BJ (cell line): ENCODE measurements at regions of chr1 and their contacts with region 1.

Region 1: GRCh38 chr1:153510984-153511410 is 24.8 kb downstream of the S100A6 start:
- DNase-seq: no peak
- H3K4me3 ChIP-seq: no peak overlapping the region
- H3K27me3 ChIP-seq: no peaks in the 10 kb centered on the region
- CTCF ChIP-seq: peak; percentile 97

Region 2: DNA sequence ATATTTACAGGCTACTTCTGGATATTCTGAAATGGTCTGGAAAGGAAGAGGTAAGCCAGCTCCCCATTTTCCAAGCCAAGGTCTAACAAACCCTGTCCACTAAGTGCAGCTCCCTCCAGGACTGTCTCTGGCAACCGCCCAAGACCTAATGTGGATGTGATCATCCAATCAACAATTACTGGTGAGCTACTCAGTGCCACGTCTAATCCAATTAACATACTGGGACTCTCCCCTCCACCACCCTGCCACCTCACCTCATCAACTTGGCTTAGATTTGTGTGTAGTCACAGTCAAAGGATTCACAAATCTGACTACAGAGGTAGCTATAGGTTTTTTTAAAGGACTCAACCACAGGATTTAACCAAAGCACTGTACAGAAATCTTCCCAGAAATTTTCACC is 25.1 kb before region 1 on chr1:
- CTCF ChIA-PET with region 1: no interaction called
- POLR2A ChIA-PET with region 1: no interaction called
- DNase-seq: no peak
- H3K4me3 ChIP-seq: no peak overlapping the region
- H3K27me3 ChIP-seq: peaks cover 9% of the 10 kb centered on the region
- CTCF ChIP-seq: no peak

Region 3: GRCh38 chr1:153526132-153526543 is 15.1 kb after region 1 on chr1:
- CTCF ChIA-PET with region 1: interaction called, 22 read pairs
- POLR2A ChIA-PET with region 1: no interaction called
- DNase-seq: no peak
- H3K4me3 ChIP-seq: no peak overlapping the region
- H3K27me3 ChIP-seq: no peaks in the 10 kb centered on the region
- CTCF ChIP-seq: no peak

Region 4: GRCh38 chr1:153566440-153567379 is 55.7 kb after region 1 on chr1:
- CTCF ChIA-PET with region 1: interaction called, 223 read pairs
- POLR2A ChIA-PET with region 1: no interaction called
- DNase-seq: peak; percentile 89
- H3K4me3 ChIP-seq: no peak overlapping the region
- H3K27me3 ChIP-seq: no peaks in the 10 kb centered on the region
- CTCF ChIP-seq: no peak

Region 5: GRCh38 chr1:153617675-153618074 is 106.7 kb after region 1 on chr1:
- CTCF ChIA-PET with region 1: interaction called, 45 read pairs
- POLR2A ChIA-PET with region 1: no interaction called
- DNase-seq: no peak
- H3K4me3 ChIP-seq: no peak overlapping the region
- H3K27me3 ChIP-seq: no peaks in the 10 kb centered on the region
- CTCF ChIP-seq: peak; percentile 89

Region 6: DNA sequence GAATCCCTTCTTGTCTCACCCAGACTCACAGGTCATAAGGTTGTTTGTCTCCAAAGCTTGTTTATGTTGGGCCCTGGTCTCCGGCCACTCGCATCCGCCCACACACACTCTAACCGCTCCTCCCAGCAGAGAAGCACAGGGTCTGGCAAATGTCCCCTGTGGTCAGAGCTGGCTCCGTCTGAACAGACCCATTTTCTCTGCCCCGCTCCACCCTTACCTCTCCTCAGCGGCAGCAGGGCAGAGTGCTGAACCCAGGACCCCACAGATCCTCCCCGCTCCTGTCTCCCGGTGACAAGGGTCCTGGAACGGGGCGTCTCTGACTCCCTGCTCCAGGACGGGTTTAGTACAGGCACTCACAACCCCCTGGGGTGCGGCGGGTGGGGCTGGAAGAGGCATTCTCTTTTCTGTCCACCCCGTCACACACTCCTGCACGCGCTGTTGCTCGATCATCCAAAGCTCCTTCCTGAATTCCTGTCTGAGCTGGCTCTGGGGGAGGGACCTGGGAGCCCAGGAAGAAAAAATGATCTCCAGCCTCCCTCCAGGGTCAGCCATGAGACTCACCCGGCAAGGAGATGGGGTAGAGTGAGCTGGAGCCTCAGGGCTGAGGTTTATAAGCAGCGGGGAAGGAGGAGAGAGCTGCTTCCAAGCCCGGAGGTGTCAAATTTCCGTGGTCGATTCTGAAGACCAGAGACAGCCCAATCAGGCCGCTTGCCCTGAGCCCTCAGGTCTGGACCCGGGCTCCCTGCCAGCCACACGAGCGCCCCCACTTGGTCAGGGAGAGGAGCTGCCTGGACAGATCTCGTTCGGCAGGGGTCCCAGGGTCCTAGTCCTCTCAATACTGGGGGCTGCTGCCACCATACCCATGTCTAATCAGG is 116.2 kb after region 1 on chr1 and contains the start of gene S100A13:
- CTCF ChIA-PET with region 1: interaction called, 14 read pairs
- POLR2A ChIA-PET with region 1: no interaction called
- DNase-seq: peak; percentile 69
- H3K4me3 ChIP-seq: peak within 1 kb of the TSS; percentile 57
- H3K27me3 ChIP-seq: no peaks in the 10 kb centered on the region
- CTCF ChIP-seq: peak; percentile 79
- polyA plus RNA-seq, gene S100A13: 310 and 313 TPM in 2 replicates